CD4-positive, alpha-beta memory T cell (primary cell): ENCODE measurements at regions of chr6 and their contacts with region 1.

Region 1: GRCh38 chr6:104537180-104537579 is 322.5 kb downstream of the HACE1 start:
- DNase-seq: no peak
- H3K4me3 ChIP-seq: no peak overlapping the region
- H3K4me3 Mint-ChIP-seq: no peak overlapping the region
- H3K27ac ChIP-seq: no peak overlapping the region
- H3K27ac Mint-ChIP-seq: no peak overlapping the region
- H3K4me1 ChIP-seq: no peaks in the 10 kb centered on the region
- H3K4me1 Mint-ChIP-seq: peaks cover 0 to 5% (median 2%) of the 10 kb centered on the region in 4 donors
- H3K27me3 ChIP-seq: no peaks in the 10 kb centered on the region
- H3K27me3 Mint-ChIP-seq: peaks cover 3 to 5% of the 10 kb centered on the region in 2 donors

Region 2: GRCh38 chr6:104525677-104526312 is 11.4 kb before region 1 on chr6:
- CTCF ChIA-PET with region 1: interaction called, 27 read pairs
- POLR2A ChIA-PET with region 1: no interaction called
- intact Hi-C with region 1: no loop called
- DNase-seq: peak; percentile 58 to 72 (median 59)
- H3K4me3 ChIP-seq: no peak overlapping the region
- H3K4me3 Mint-ChIP-seq: peak overlapping the region in 7 of 8 donors; percentile 19 to 74 (median 67)
- H3K27ac ChIP-seq: no peak overlapping the region
- H3K27ac Mint-ChIP-seq: peak overlapping the region in 1 of 7 donors; percentile 28
- H3K4me1 ChIP-seq: no peaks in the 10 kb centered on the region
- H3K4me1 Mint-ChIP-seq: peaks cover 0 to 5% (median 4%) of the 10 kb centered on the region in 4 donors
- H3K27me3 ChIP-seq: no peaks in the 10 kb centered on the region
- H3K27me3 Mint-ChIP-seq: peaks cover 0 to 8% of the 10 kb centered on the region in 2 donors

Region 3: GRCh38 chr6:104548297-104548696 is 11.1 kb after region 1 on chr6:
- CTCF ChIA-PET with region 1: no interaction called
- POLR2A ChIA-PET with region 1: no interaction called
- intact Hi-C with region 1: no loop called
- DNase-seq: no peak
- H3K4me3 ChIP-seq: no peak overlapping the region
- H3K4me3 Mint-ChIP-seq: no peak overlapping the region
- H3K27ac ChIP-seq: no peak overlapping the region
- H3K27ac Mint-ChIP-seq: no peak overlapping the region
- H3K4me1 ChIP-seq: no peaks in the 10 kb centered on the region
- H3K4me1 Mint-ChIP-seq: no peaks in the 10 kb centered on the region
- H3K27me3 ChIP-seq: no peaks in the 10 kb centered on the region
- H3K27me3 Mint-ChIP-seq: peaks cover 5 to 7% of the 10 kb centered on the region in 2 donors